Activated CD4-positive, alpha-beta T cell treated with anti-CD3 and anti-CD28 coated beads for 36 hours (primary cell): ENCODE measurements at regions of chr7 and their contacts with region 1.

Region 1: DNA sequence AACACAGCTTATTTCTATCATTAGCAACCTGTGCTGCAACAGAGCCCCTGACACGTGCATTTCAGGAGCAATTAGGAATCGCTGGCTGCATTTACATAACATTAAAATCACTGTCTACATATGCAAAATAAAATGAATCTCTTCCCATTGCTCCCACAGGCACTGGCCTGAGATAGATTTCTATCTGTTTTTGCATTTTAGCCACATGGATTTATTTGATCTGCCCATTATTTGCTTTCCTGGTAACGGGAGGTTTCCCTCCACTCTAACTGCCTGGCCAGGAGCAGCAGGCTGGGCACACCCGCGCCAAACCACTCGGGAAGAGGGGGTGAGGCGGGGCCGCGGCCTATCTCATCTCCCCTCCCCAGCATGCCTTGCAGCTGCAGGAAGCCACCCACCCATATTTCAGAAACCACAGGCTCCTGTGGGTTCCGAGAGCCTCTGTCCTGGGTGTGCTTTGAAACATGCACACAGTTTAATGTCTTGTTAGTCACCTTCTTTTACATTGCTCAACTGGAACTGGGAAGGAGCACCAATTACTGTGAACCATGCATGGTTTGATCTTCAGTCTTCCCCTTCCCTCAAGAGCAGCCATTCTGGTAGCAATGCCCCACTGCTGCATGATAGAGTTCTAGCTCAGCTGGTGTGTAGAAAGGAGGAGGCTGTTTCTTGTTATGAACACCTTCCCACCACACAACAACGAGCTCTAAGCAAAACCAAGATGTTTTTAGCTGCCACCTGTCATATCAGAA is 37.7 kb upstream of the IKZF1 start:
- DNase-seq: peak; percentile 87
- ATAC-seq: peak; percentile 77
- H3K4me3 Mint-ChIP-seq: peak overlapping the region; percentile 58
- H3K27ac Mint-ChIP-seq: peak overlapping the region; percentile 98
- H3K4me1 Mint-ChIP-seq: peaks cover 94% of the 10 kb centered on the region
- H3K27me3 Mint-ChIP-seq: no peaks in the 10 kb centered on the region

Region 2: DNA sequence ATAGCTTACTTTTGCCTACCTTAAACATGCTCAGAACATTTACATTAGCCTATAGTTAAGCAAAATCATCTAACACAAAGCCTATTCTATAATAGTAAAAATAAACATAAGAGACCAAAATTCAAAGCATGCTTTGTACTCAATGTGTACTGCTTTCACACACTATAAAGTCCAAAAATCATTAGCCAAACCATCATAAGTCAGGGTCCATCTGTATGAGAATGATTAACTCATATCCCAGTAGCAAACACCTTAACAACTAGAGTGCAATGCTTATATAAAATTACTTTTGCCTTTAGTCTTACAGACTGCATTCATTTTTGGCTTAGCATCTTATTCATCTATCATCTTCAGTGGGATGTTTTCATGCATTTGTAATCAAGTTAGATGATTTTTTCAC is 542.7 kb before region 1 on chr7:
- CTCF ChIA-PET with region 1: no interaction called
- POLR2A ChIA-PET with region 1: no interaction called
- intact Hi-C with region 1: no loop called
- DNase-seq: no peak
- ATAC-seq: no peak
- H3K4me3 Mint-ChIP-seq: no peak overlapping the region
- H3K27ac Mint-ChIP-seq: no peak overlapping the region
- H3K4me1 Mint-ChIP-seq: no peaks in the 10 kb centered on the region
- H3K27me3 Mint-ChIP-seq: peaks cover 2% of the 10 kb centered on the region

Region 3: GRCh38 chr7:50142425-50143017 is 124.3 kb before region 1 on chr7:
- CTCF ChIA-PET with region 1: no interaction called
- POLR2A ChIA-PET with region 1: interaction called, 9 read pairs
- intact Hi-C with region 1: loop called in 1 of 2 experiments (anchors 2 kb)
- DNase-seq: peak; percentile 51
- ATAC-seq: peak; percentile 63
- H3K4me3 Mint-ChIP-seq: peak overlapping the region; percentile 53
- H3K27ac Mint-ChIP-seq: peak overlapping the region; percentile 94
- H3K4me1 Mint-ChIP-seq: peaks cover 43% of the 10 kb centered on the region
- H3K27me3 Mint-ChIP-seq: no peaks in the 10 kb centered on the region

Region 4: DNA sequence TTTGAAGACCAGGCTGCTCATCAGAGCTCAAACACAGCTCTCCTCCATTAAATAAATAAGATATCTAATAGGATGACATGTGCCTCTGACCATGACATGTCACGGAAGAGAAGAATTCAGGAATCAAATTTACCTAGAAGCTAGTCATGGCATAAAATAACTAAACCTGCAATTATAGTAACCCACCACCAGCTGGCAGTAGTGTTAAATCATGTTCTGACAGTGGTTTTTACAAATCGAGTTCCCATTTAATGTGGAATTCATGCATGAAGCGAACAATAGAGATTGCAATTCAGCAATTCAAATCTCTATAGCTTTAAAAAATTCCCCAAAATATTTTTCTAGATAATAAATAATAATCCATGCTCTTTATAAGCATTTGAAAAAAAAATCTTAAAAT is 36.8 kb before region 1 on chr7:
- CTCF ChIA-PET with region 1: interaction called, 14 read pairs
- POLR2A ChIA-PET with region 1: no interaction called
- intact Hi-C with region 1: loop called (anchors 1 to 2 kb)
- DNase-seq: no peak
- ATAC-seq: no peak
- H3K4me3 Mint-ChIP-seq: no peak overlapping the region
- H3K27ac Mint-ChIP-seq: no peak overlapping the region
- H3K4me1 Mint-ChIP-seq: peaks cover 37% of the 10 kb centered on the region
- H3K27me3 Mint-ChIP-seq: no peaks in the 10 kb centered on the region

Region 5: GRCh38 chr7:50304158-50304910 is 37.5 kb after region 1 on chr7 and contains the start of gene IKZF1:
- CTCF ChIA-PET with region 1: interaction called, 5 read pairs
- POLR2A ChIA-PET with region 1: interaction called, 6 read pairs
- intact Hi-C with region 1: loop called (anchors 1 kb)
- DNase-seq: peak; percentile 82
- ATAC-seq: peak; percentile 21
- H3K4me3 Mint-ChIP-seq: peak within 1 kb of the TSS; percentile 95
- H3K27ac Mint-ChIP-seq: peak within 1 kb of the TSS; percentile 100
- H3K4me1 Mint-ChIP-seq: peaks cover 40% of the 10 kb centered on the region
- H3K27me3 Mint-ChIP-seq: no peaks in the 10 kb centered on the region
- total RNA-seq, gene IKZF1: 245 to 260 TPM

Region 6: DNA sequence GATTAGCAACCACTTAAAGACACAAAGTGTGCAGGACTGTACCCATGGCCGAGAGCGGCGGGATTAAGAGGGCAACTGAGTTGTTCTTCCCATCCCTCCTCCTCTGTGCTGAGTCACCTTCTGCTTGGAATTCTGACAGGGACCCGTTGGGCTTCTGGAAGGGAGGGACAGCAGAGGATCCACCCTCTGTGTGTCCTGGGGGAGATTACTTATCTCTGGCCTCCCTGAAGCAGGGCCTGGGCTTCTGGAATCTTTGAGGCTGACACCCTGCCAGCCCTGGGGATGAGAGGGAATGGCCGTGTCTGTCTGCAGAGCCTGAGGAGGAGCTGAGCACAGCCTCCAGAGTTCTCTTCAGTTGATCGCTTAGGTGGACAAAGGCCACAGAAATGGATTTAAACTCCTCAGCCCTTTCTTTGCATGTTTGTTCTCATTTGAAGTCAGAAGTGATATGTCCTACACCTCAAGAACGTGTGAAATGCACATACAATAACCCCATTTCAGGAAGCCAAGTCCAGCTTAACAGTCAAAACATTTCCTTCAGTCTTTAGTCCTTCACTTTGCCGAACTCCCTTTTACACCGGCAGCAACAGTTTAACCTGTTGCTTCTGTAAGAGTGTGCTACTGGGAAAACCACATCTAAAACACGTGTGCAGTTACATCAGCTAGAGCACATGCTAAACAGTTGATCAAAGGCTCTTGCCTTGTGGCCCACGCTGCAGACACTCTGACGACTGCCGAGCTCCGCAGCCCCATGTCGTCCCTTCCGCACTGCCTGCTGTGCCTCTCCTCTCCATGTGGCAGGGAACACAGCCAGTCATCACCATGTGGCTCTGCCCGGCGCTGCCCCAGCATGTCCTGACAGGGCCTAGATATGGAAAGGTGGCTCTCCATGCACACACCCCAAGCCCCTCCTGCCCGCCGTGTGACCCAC is 93.4 kb after region 1 on chr7:
- CTCF ChIA-PET with region 1: interaction called, 4 read pairs
- POLR2A ChIA-PET with region 1: interaction called, 5 read pairs
- intact Hi-C with region 1: loop called in 1 of 2 experiments (anchors 2 kb)
- DNase-seq: peak; percentile 89
- ATAC-seq: peak; percentile 77
- H3K4me3 Mint-ChIP-seq: peak overlapping the region; percentile 67
- H3K27ac Mint-ChIP-seq: peak overlapping the region; percentile 99
- H3K4me1 Mint-ChIP-seq: peaks cover 97% of the 10 kb centered on the region
- H3K27me3 Mint-ChIP-seq: no peaks in the 10 kb centered on the region

Region 7: GRCh38 chr7:51123322-51124029 is 856.7 kb after region 1 on chr7:
- CTCF ChIA-PET with region 1: no interaction called
- POLR2A ChIA-PET with region 1: no interaction called
- intact Hi-C with region 1: loop called in 1 of 2 experiments (anchors 5 kb)
- DNase-seq: peak; percentile 92
- ATAC-seq: peak; percentile 99
- H3K4me3 Mint-ChIP-seq: peak overlapping the region; percentile 10
- H3K27ac Mint-ChIP-seq: peak overlapping the region; percentile 88
- H3K4me1 Mint-ChIP-seq: peaks cover 40% of the 10 kb centered on the region
- H3K27me3 Mint-ChIP-seq: no peaks in the 10 kb centered on the region